HEK293T (cell line): ENCODE measurements at regions of chr1 and their contacts with region 1.

Region 1: DNA sequence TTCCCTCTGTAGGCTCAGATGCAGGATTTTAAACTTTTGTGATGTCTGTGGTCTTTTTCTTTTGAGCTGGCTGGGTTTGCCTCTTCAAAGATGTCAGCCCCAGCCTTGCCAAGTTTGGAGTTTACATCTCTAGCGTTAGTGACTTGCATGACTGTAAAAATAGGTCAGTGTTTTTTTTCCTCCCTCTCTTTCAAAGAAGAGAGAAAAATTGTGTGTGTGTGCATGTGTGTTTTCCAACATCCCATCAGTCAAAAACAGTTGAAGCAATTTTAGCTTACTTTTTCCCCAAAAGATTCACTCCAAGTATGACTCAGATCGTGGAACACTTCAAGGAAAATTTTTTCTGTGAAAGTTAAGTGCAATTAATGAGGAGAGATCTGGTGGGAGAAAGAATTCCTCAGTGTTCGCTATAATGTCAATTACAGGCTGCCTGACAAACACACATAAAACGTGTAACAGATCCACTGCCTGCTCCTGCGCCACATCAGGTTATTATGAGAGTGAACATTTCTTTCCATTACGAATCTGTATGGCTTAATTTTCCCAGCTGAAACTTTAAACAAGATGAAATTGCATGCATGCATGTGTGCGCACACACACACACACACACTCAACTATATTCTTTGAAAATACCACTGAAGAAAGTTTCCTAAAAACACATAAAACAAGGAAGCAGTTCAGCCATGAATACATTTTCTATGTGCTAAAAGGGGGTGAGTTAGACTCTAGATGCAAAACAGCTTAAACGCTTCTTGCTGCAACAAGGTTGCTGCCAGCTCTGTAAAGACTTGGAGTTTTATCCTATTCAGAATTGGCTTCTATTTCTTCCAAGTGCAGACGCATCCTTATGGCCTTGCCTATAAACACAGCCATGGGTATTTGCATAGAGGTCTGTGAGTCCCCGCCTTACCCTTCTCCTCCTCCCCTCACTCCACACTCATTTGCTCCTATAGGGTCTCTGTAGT is 55.5 kb downstream of the TLR5 start:
- DNase-seq: no peak

Region 2: GRCh38 chr1:222739465-222739864 is 348.1 kb before region 1 on chr1:
- CTCF ChIA-PET with region 1: interaction called, 15 read pairs
- POLR2A ChIA-PET with region 1: no interaction called
- DNase-seq: no peak

Region 3: DNA sequence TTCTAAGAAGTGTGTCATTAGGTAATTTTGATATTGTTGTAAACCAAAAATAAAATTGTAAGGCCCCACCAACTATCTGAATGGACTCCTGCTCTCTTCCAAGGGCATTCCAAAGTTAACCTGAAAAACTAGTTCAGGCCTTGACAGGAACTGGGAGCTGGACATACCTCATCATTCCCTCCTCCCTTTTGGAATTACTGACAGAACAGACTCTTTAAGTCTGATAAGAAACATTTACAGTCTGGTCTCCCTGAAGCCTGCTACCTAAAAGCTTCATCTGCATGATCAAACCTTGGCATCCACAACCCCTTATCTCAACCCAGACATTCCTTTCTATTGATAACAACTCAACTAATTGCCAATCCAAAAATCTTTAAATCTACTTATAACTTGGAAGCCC is 68.3 kb before region 1 on chr1:
- CTCF ChIA-PET with region 1: no interaction called
- POLR2A ChIA-PET with region 1: no interaction called
- DNase-seq: no peak

Region 4: DNA sequence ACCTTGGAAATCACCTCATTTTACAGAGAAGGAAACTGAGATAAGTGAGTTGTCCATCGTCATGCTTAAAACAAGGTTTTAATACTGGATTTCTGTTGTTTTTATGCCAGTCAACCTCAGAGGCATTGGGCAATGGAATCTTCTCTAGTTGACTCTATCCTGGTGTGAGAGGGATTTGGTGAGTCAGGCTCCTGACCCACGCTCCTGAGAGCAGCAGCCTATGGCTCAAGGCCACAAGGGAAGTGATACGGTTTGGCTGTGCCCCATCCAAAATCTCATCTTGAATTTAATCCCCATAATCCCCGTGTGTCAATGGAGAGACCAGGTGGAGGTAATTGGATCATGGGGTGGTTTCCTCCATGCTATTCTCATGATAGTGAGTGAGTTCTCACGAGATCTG is 34.6 kb before region 1 on chr1:
- CTCF ChIA-PET with region 1: no interaction called
- POLR2A ChIA-PET with region 1: no interaction called
- DNase-seq: no peak

Region 5: DNA sequence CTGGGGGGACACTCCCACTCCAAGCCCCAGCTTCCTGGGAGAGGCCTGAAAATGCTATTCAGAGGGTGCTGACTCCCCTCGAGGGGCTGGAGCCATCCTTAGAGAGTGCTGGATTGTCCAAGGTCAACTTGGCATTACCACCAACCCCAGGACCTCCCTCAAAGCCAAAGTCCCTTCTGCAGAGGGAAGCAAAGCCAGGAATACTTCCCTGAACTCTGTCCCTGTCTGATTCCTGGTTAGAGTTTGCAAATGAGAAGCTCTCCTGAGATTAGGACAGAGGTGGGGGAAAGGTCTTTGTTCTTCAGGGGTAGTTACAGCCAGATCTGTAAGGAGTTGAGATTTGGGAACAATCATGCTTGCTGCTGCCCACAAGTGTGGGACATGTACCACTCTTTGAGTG is 10.1 kb after region 1 on chr1:
- CTCF ChIA-PET with region 1: interaction called, 29 read pairs
- POLR2A ChIA-PET with region 1: no interaction called
- DNase-seq: no peak

Region 6: DNA sequence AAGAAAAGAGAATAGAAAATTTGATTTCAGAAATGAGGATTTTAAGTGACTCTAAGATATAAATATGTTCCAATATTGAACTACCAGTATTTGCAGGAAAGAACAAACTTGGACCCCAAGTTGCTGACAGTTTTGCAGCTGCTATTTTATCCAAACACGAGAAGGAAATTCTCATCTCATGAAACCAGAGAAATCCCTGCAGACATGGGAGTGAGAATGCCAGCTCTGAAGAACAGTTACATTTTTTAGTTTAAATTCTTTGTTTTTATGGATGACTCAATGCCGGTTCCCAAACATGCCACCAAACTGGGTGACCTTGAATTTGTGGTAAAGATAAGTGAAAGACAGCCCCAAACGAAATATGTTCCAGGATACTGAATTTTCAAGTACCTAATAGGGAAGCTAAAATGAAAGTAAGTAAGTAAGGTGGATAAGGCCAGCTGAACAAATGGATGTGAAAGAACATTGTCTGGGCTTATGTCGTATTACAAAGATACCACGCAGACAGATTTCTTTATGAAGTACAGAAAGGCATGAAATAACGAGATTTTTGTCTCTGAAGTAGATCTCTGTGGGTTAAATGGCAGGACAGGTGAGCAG is 35.5 kb after region 1 on chr1:
- CTCF ChIA-PET with region 1: interaction called, 28 read pairs
- POLR2A ChIA-PET with region 1: no interaction called
- DNase-seq: no peak